ENCODE measurements at regions of chr4 and their contacts with region 1.

Region 1: DNA sequence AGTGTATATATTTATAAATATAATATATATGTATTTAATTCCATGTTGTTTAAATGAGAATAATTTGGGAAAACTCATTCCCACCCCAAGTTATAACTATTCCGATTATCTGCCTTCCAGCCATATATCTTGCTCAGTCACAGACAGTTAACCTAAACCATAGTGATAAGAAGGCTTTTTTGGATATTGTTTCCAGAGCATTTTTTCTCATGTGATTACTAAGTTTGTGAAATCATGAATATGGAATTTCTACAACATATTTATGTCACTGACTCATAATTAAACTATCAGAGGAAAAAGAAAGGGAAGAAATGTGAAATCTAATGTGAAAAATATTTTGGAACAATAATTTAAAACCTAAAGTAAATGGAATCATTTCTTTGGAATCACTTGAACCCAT is 1163.5 kb upstream of the PABPC4L start:
- DNase-seq: no peak
- ATAC-seq: no peak
- H3K4me3 ChIP-seq: no peak overlapping the region
- H3K27ac ChIP-seq: no peak overlapping the region
- H3K4me1 ChIP-seq: no peaks in the 10 kb centered on the region
- H3K27me3 ChIP-seq: no peaks in the 10 kb centered on the region
- CTCF ChIP-seq: no peak

Region 2: GRCh38 chr4:135382280-135382959 is 17.4 kb after region 1 on chr4:
- intact Hi-C with region 1: loop called in 1 of 10 experiments (anchors 1 kb)
- DNase-seq: no peak
- ATAC-seq: no peak
- H3K4me3 ChIP-seq: no peak overlapping the region
- H3K27ac ChIP-seq: no peak overlapping the region
- H3K4me1 ChIP-seq: no peaks in the 10 kb centered on the region
- H3K27me3 ChIP-seq: no peaks in the 10 kb centered on the region
- CTCF ChIP-seq: no peak